ENCODE measurements at regions of chr3 and their contacts with region 1.

Region 1: GRCh38 chr3:169668957-169669681 is 5.6 kb upstream of the MECOM start:
- DNase-seq: peak; percentile 70
- H3K4me3 ChIP-seq: peak overlapping the region in 3 of 4 donors; percentile 25 to 35 (median 30)
- H3K27ac ChIP-seq: peak overlapping the region in 1 of 4 donors; percentile 46
- H3K4me1 ChIP-seq: peaks cover 0 to 20% (median 17%) of the 10 kb centered on the region in 4 donors
- H3K27me3 ChIP-seq: peaks cover 47 to 98% (median 73%) of the 10 kb centered on the region in 3 donors
- CTCF ChIP-seq: peak; percentile 39 to 66 (median 53)
- EP300 ChIP-seq: no peak
- POLR2A ChIP-seq: no peak

Region 2: DNA sequence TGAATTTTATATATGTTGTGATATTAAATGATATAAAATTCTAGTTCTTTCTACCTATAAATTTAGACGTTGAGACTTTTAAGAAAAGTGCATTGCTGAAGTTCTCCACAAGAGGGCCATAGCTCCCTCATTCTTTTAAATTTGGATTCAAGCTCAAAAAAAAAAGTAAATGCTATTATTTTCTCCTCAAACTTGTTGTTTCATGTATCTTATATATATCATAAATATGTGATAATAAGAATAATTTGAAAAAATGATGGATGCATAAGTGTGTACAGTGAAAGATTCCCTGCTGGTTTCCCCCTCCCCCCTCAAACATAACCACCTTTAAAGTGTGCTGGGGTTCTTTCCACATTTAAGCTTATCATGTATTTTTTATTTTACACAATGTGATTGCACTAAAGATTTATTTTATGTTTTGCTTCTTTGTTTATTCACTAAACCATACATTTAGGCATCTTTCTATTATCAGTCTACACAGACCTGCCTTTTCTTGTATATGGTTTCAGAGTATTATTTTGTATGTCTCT is 804.0 kb before region 1 on chr3:
- intact Hi-C with region 1: loop called (anchors 5 kb)
- DNase-seq: no peak
- H3K4me3 ChIP-seq: no peak overlapping the region
- H3K27ac ChIP-seq: no peak overlapping the region
- H3K4me1 ChIP-seq: peaks cover 0 to 9% (median 0%) of the 10 kb centered on the region in 4 donors
- H3K27me3 ChIP-seq: no peaks in the 10 kb centered on the region
- CTCF ChIP-seq: peak in 2 of 4 experiments; percentile 19 to 71
- EP300 ChIP-seq: no peak
- POLR2A ChIP-seq: no peak

Region 3: GRCh38 chr3:168952551-168952950 is 716.6 kb before region 1 on chr3:
- intact Hi-C with region 1: loop called (anchors 2 kb)
- DNase-seq: no peak
- H3K4me3 ChIP-seq: peak overlapping the region in 1 of 4 donors; percentile 24
- H3K27ac ChIP-seq: no peak overlapping the region
- H3K4me1 ChIP-seq: peaks cover 0 to 22% (median 7%) of the 10 kb centered on the region in 4 donors
- H3K27me3 ChIP-seq: no peaks in the 10 kb centered on the region
- CTCF ChIP-seq: peak in 1 of 4 experiments; percentile 25
- EP300 ChIP-seq: no peak
- POLR2A ChIP-seq: no peak

Region 4: GRCh38 chr3:169041677-169042171 is 627.4 kb before region 1 on chr3:
- intact Hi-C with region 1: loop called (anchors 5 kb)
- DNase-seq: no peak
- H3K4me3 ChIP-seq: no peak overlapping the region
- H3K27ac ChIP-seq: no peak overlapping the region
- H3K4me1 ChIP-seq: peaks cover 0 to 4% (median 0%) of the 10 kb centered on the region in 4 donors
- H3K27me3 ChIP-seq: no peaks in the 10 kb centered on the region
- CTCF ChIP-seq: peak in 3 of 4 experiments; percentile 17 to 49 (median 19)
- EP300 ChIP-seq: no peak
- POLR2A ChIP-seq: no peak

Region 5: GRCh38 chr3:169894110-169894509 is 225.0 kb after region 1 on chr3:
- intact Hi-C with region 1: no loop called
- DNase-seq: no peak
- H3K4me3 ChIP-seq: no peak overlapping the region
- H3K27ac ChIP-seq: no peak overlapping the region
- H3K4me1 ChIP-seq: no peaks in the 10 kb centered on the region
- H3K27me3 ChIP-seq: no peaks in the 10 kb centered on the region
- CTCF ChIP-seq: no peak
- EP300 ChIP-seq: no peak
- POLR2A ChIP-seq: no peak